Caco-2 (cell line): ENCODE measurements at regions of chr5 and their contacts with region 1.

Region 1: GRCh38 chr5:42854807-42855206 is 43.1 kb upstream of the SELENOP start:
- DNase-seq: peak; percentile 60 to 74
- H3K4me3 ChIP-seq: no peak overlapping the region
- H3K4me3 Mint-ChIP-seq: no peak overlapping the region
- H3K27ac Mint-ChIP-seq: peak overlapping the region; percentile 51
- H3K4me1 ChIP-seq: peaks cover 39% of the 10 kb centered on the region
- H3K4me1 Mint-ChIP-seq: peaks cover 20% of the 10 kb centered on the region
- H3K27me3 ChIP-seq: no peaks in the 10 kb centered on the region
- H3K27me3 Mint-ChIP-seq: no peaks in the 10 kb centered on the region
- CTCF ChIP-seq: no peak

Region 2: GRCh38 chr5:42811591-42812446 is 43.0 kb before region 1 on chr5 and contains the start of gene SELENOP:
- CTCF ChIA-PET with region 1: no interaction called
- POLR2A ChIA-PET with region 1: no interaction called
- intact Hi-C with region 1: loop called (anchors 1 kb)
- DNase-seq: peak; percentile 76 to 83
- H3K4me3 ChIP-seq: peak within 1 kb of the TSS; percentile 45
- H3K4me3 Mint-ChIP-seq: peak within 1 kb of the TSS; percentile 75
- H3K27ac Mint-ChIP-seq: peak within 1 kb of the TSS; percentile 82
- H3K4me1 ChIP-seq: peaks cover 25% of the 10 kb centered on the region
- H3K4me1 Mint-ChIP-seq: peaks cover 30% of the 10 kb centered on the region
- H3K27me3 ChIP-seq: no peaks in the 10 kb centered on the region
- H3K27me3 Mint-ChIP-seq: no peaks in the 10 kb centered on the region
- CTCF ChIP-seq: no peak
- total RNA-seq, gene SELENOP: 114 and 153 TPM in 2 replicates

Region 3: GRCh38 chr5:42828671-42829070 is 26.1 kb before region 1 on chr5:
- CTCF ChIA-PET with region 1: no interaction called
- POLR2A ChIA-PET with region 1: no interaction called
- intact Hi-C with region 1: no loop called
- DNase-seq: no peak
- H3K4me3 ChIP-seq: no peak overlapping the region
- H3K4me3 Mint-ChIP-seq: no peak overlapping the region
- H3K27ac Mint-ChIP-seq: no peak overlapping the region
- H3K4me1 ChIP-seq: no peaks in the 10 kb centered on the region
- H3K4me1 Mint-ChIP-seq: peaks cover 13% of the 10 kb centered on the region
- H3K27me3 ChIP-seq: no peaks in the 10 kb centered on the region
- H3K27me3 Mint-ChIP-seq: no peaks in the 10 kb centered on the region
- CTCF ChIP-seq: no peak

Region 4: DNA sequence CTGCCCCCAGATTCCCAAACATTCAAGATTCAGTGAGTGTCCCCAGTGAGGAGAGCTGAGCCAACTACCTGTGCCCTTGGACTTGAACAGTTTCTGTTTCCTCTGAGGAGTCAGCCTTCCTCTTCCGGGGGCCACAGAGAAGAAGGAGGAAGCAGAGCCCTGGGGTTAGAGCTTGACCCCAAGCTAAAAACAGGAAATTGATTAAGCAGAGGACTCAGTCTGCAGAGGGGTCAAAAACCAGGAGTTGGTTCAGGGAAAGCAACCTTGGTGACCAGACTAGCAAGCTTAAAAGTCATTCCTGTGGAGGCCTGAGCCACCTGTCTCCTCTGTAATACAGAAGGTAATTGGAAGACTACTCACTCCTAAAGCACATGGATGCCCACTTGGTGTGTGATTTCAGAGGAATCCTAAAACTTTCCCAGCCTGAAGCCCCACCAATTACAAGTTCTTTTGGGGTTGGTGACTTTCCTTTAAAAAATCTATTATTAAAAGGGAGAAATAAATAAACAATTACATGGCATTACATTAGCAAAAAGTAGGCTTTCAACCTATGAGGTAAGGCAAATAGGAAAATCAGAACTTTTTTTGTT is 21.1 kb after region 1 on chr5:
- CTCF ChIA-PET with region 1: interaction called, 4 read pairs
- POLR2A ChIA-PET with region 1: no interaction called
- intact Hi-C with region 1: loop called (anchors 2 kb)
- DNase-seq: no peak
- H3K4me3 ChIP-seq: no peak overlapping the region
- H3K4me3 Mint-ChIP-seq: no peak overlapping the region
- H3K27ac Mint-ChIP-seq: no peak overlapping the region
- H3K4me1 ChIP-seq: peaks cover 58% of the 10 kb centered on the region
- H3K4me1 Mint-ChIP-seq: peaks cover 49% of the 10 kb centered on the region
- H3K27me3 ChIP-seq: no peaks in the 10 kb centered on the region
- H3K27me3 Mint-ChIP-seq: no peaks in the 10 kb centered on the region
- CTCF ChIP-seq: no peak

Region 5: DNA sequence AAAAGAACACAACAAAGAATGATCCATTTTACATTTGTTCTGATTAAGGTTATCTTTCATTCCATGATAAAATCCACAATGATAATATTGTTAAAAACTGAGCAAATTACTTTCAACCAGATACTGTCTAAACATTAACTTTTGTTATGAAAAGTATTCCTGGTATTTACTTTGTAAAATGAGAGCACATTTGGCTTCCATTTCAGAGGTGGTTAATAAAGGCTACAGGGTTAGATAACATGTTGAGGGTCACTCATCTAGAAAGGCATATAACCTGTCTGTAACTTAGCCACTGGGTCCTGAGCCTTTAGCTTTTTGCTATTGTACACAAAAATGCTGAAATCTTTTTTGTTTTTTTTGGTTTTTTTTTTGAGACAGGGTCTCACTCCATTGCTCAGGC is 86.0 kb after region 1 on chr5:
- CTCF ChIA-PET with region 1: no interaction called
- POLR2A ChIA-PET with region 1: no interaction called
- intact Hi-C with region 1: no loop called
- DNase-seq: no peak
- H3K4me3 ChIP-seq: no peak overlapping the region
- H3K4me3 Mint-ChIP-seq: no peak overlapping the region
- H3K27ac Mint-ChIP-seq: no peak overlapping the region
- H3K4me1 ChIP-seq: peaks cover 23% of the 10 kb centered on the region
- H3K4me1 Mint-ChIP-seq: peaks cover 17% of the 10 kb centered on the region
- H3K27me3 ChIP-seq: no peaks in the 10 kb centered on the region
- H3K27me3 Mint-ChIP-seq: no peaks in the 10 kb centered on the region
- CTCF ChIP-seq: no peak